ENCODE measurements at regions of chr5 and their contacts with region 1.

Region 1: GRCh38 chr5:52948418-52949076 is 40.6 kb upstream of the ITGA2 start:
- DNase-seq: no peak
- H3K4me3 ChIP-seq: no peak overlapping the region
- H3K27ac ChIP-seq: peak overlapping the region in 3 of 4 donors; percentile 0 to 46 (median 44)
- H3K4me1 ChIP-seq: peaks cover 0 to 70% (median 18%) of the 10 kb centered on the region in 3 donors
- H3K27me3 ChIP-seq: no peaks in the 10 kb centered on the region
- CTCF ChIP-seq: peak; percentile 31 to 92 (median 82)
- POLR2A ChIP-seq: no peak

Region 2: DNA sequence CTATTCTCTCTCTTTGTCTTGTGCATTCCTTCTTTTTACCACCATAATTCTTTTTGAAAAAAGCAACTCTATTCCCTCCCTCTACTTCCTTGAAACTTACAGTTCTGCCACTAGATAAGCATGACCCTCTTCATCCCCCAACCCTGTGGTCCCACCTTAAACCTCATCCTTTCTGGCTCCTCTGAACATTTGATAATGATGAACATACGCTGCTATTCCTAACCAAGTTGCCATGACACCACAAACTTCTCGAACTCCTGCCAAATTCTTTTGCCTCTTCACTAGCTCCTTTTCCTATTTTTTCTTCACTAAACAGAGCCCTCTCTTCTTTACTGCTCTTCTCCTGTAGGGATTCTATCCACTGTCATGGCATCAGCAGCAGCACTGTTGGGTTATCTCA is 104.0 kb after region 1 on chr5:
- intact Hi-C with region 1: loop called (anchors 5 kb)
- DNase-seq: no peak
- H3K4me3 ChIP-seq: no peak overlapping the region
- H3K27ac ChIP-seq: no peak overlapping the region
- H3K4me1 ChIP-seq: no peaks in the 10 kb centered on the region
- H3K27me3 ChIP-seq: no peaks in the 10 kb centered on the region
- CTCF ChIP-seq: no peak
- POLR2A ChIP-seq: no peak

Region 3: DNA sequence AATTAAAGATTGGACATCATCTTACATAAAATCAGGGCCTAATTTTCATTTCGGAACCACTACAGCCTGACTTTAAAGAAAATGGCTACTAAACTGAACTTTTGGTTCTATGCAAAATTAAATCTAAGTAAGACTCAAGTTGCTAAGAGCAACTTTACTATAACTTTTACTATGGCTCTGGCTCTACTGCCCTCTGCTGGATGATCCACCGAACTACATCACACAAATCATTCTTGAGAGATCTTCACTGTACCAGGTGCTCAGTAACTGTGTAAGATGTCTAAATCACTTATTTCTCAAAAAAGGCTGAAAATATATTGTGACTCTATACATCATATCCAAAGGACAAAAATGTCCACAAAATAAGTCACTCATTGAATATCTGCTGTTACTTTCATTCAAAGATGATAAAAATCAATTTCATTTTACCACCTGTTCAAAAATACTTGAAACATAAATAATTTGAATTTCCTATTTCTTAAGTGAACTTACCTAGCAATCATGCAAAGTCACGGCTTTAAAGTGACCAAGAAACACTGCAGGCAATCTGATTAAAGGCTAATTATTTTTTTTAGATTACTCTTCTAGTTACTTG is 147.5 kb after region 1 on chr5:
- intact Hi-C with region 1: loop called (anchors 5 kb)
- DNase-seq: no peak
- H3K4me3 ChIP-seq: no peak overlapping the region
- H3K27ac ChIP-seq: no peak overlapping the region
- H3K4me1 ChIP-seq: no peaks in the 10 kb centered on the region
- H3K27me3 ChIP-seq: no peaks in the 10 kb centered on the region
- CTCF ChIP-seq: peak; percentile 74 to 92 (median 84)
- POLR2A ChIP-seq: no peak

Measured in esophagus squamous epithelium (tissue), 5 donors.